RWPE1 (cell line): ENCODE measurements at regions of chr4 and their contacts with region 1.

Region 1: DNA sequence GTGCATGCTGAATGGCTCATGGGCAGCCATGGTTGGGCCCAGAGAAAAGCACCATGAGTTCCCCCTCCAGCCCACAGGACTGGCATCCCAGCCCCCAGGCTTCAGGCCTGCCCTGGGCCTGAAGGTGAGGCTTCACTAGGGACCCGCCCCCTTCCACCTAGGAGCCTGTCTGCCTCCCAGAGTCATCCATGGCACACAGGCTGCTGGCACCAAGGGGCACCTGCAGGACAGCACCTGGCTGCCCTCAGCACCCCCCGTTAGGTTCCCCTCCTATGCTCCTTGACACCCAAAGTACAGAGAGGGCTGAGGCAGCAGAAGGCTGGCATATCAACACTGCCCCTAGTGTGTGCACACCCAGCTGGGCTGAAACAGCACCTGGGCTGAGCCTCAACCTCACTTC is 566.7 kb upstream of the PCDH7 start:
- DNase-seq: no peak
- H3K27ac ChIP-seq: no peak overlapping the region
- CTCF ChIP-seq: no peak

Region 2: DNA sequence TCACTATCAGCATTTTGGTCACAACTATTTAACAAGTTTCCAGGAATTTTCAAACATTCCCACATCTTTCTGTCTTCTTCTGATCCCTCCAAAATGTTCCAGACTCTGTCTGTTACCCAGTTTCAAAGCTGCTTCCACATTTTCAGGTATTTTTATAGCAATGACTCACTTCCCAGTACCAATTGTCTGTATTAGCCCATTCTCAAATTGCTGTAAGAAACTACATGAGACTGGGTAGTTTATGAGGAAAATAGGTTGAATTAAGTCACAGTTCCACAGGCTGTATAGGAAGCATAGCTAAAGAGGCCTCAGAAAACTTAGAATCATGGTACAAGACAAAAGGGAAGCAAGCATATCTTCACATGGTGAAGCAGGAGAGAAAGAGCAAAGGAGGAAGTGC is 91.7 kb after region 1 on chr4:
- CTCF ChIA-PET with region 1: interaction called, 11 read pairs
- POLR2A ChIA-PET with region 1: no interaction called
- DNase-seq: no peak
- H3K27ac ChIP-seq: no peak overlapping the region
- CTCF ChIP-seq: no peak